Endothelial cell of umbilical vein (primary cell): ENCODE measurements at regions of chr12 and their contacts with region 1.

Region 1: GRCh38 chr12:76820888-76821482 is 57.1 kb downstream of the ZDHHC17 start:
- DNase-seq: peak; percentile 11
- H3K4me3 ChIP-seq: no peak overlapping the region
- H3K27ac ChIP-seq: no peak overlapping the region
- H3K4me1 ChIP-seq: no peaks in the 10 kb centered on the region
- H3K27me3 ChIP-seq: no peaks in the 10 kb centered on the region
- CTCF ChIP-seq: peak; percentile 44 to 51
- POLR2A ChIP-seq: no peak

Region 2: GRCh38 chr12:76621582-76622024 is 199.4 kb before region 1 on chr12:
- CTCF ChIA-PET with region 1: interaction called, 24 read pairs
- POLR2A ChIA-PET with region 1: no interaction called
- dilution Hi-C with region 1: no loop called
- intact Hi-C with region 1: loop called (anchors 1 kb)
- DNase-seq: peak; percentile 75
- H3K4me3 ChIP-seq: no peak overlapping the region
- H3K27ac ChIP-seq: no peak overlapping the region
- H3K4me1 ChIP-seq: peaks cover 2% of the 10 kb centered on the region
- H3K27me3 ChIP-seq: peaks cover 0 to 2% of the 10 kb centered on the region in 2 experiments
- CTCF ChIP-seq: peak; percentile 72 to 77
- POLR2A ChIP-seq: no peak

Region 3: GRCh38 chr12:76810671-76811419 is 10.1 kb before region 1 on chr12:
- CTCF ChIA-PET with region 1: interaction called, 15 read pairs
- POLR2A ChIA-PET with region 1: no interaction called
- dilution Hi-C with region 1: no loop called
- intact Hi-C with region 1: no loop called
- DNase-seq: no peak
- H3K4me3 ChIP-seq: no peak overlapping the region
- H3K27ac ChIP-seq: no peak overlapping the region
- H3K4me1 ChIP-seq: no peaks in the 10 kb centered on the region
- H3K27me3 ChIP-seq: no peaks in the 10 kb centered on the region
- CTCF ChIP-seq: no peak
- POLR2A ChIP-seq: no peak

Region 4: GRCh38 chr12:76957301-76957700 is 136.3 kb after region 1 on chr12:
- CTCF ChIA-PET with region 1: no interaction called
- POLR2A ChIA-PET with region 1: no interaction called
- dilution Hi-C with region 1: no loop called
- intact Hi-C with region 1: no loop called
- DNase-seq: no peak
- H3K4me3 ChIP-seq: no peak overlapping the region
- H3K27ac ChIP-seq: no peak overlapping the region
- H3K4me1 ChIP-seq: no peaks in the 10 kb centered on the region
- H3K27me3 ChIP-seq: peaks cover 0 to 4% of the 10 kb centered on the region in 2 experiments
- CTCF ChIP-seq: no peak
- POLR2A ChIP-seq: no peak